ENCODE measurements at regions of chr6 and their contacts with region 1.

Region 1: DNA sequence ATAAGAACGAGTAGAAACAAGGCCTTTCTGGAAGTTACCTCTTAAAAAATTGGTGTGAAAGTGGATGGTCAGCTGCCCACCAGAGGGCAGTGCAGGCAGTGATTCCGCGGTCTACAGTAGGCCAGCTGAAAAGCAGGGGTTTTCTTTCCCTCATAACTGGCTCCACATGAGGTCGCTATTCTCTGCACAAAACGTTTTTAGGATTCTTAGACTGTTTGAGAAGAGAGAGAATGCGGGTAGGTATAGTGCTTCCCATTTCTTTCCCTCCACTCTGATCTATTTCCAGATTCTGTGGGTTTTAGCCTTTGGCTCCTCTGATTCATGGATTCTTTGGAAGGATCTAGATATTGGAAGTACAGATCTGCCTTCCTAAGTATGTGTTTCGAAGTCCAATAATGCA is 14.2 kb downstream of the FIG4 start:
- DNase-seq: peak; percentile 88
- H3K4me3 Mint-ChIP-seq: no peak overlapping the region
- H3K27ac Mint-ChIP-seq: no peak overlapping the region
- H3K4me1 Mint-ChIP-seq: peaks cover 5% of the 10 kb centered on the region
- H3K27me3 Mint-ChIP-seq: no peaks in the 10 kb centered on the region
- CTCF ChIP-seq: peak; percentile 95

Region 2: GRCh38 chr6:109526905-109527628 is 178.2 kb before region 1 on chr6:
- CTCF ChIA-PET with region 1: interaction called, 5 read pairs
- POLR2A ChIA-PET with region 1: no interaction called
- intact Hi-C with region 1: loop called (anchors 1 kb)
- DNase-seq: peak; percentile 80
- H3K4me3 Mint-ChIP-seq: no peak overlapping the region
- H3K27ac Mint-ChIP-seq: no peak overlapping the region
- H3K4me1 Mint-ChIP-seq: peaks cover 6% of the 10 kb centered on the region
- H3K27me3 Mint-ChIP-seq: peaks cover 2% of the 10 kb centered on the region
- CTCF ChIP-seq: peak; percentile 70

Region 3: GRCh38 chr6:109865968-109866367 is 160.7 kb after region 1 on chr6:
- CTCF ChIA-PET with region 1: no interaction called
- POLR2A ChIA-PET with region 1: no interaction called
- intact Hi-C with region 1: loop called (anchors 1 kb)
- DNase-seq: peak; percentile 1
- H3K4me3 Mint-ChIP-seq: no peak overlapping the region
- H3K27ac Mint-ChIP-seq: no peak overlapping the region
- H3K4me1 Mint-ChIP-seq: no peaks in the 10 kb centered on the region
- H3K27me3 Mint-ChIP-seq: no peaks in the 10 kb centered on the region
- CTCF ChIP-seq: no peak

Region 4: GRCh38 chr6:110053395-110054240 is 348.4 kb after region 1 on chr6:
- CTCF ChIA-PET with region 1: interaction called, 24 read pairs
- POLR2A ChIA-PET with region 1: no interaction called
- intact Hi-C with region 1: loop called (anchors 1 kb)
- DNase-seq: peak; percentile 71
- H3K4me3 Mint-ChIP-seq: no peak overlapping the region
- H3K27ac Mint-ChIP-seq: no peak overlapping the region
- H3K4me1 Mint-ChIP-seq: no peaks in the 10 kb centered on the region
- H3K27me3 Mint-ChIP-seq: peaks cover 11% of the 10 kb centered on the region
- CTCF ChIP-seq: peak; percentile 65